Left cardiac atrium (tissue), 4 donors: ENCODE measurements at regions of chr10 and their contacts with region 1.

Region 1: GRCh38 chr10:13382703-13383398 is 34.8 kb upstream of the SEPHS1 start:
- DNase-seq: no peak
- ATAC-seq: peak in 1 of 2 donors; percentile 33

Region 2: GRCh38 chr10:12875100-12875499 is 507.8 kb before region 1 on chr10:
- intact Hi-C with region 1: no loop called
- DNase-seq: no peak
- ATAC-seq: peak; percentile 42 to 91

Region 3: GRCh38 chr10:13425397-13425796 is 42.5 kb after region 1 on chr10:
- intact Hi-C with region 1: loop called in 1 of 2 experiments (anchors 5 kb)
- DNase-seq: no peak
- ATAC-seq: no peak

Region 4: DNA sequence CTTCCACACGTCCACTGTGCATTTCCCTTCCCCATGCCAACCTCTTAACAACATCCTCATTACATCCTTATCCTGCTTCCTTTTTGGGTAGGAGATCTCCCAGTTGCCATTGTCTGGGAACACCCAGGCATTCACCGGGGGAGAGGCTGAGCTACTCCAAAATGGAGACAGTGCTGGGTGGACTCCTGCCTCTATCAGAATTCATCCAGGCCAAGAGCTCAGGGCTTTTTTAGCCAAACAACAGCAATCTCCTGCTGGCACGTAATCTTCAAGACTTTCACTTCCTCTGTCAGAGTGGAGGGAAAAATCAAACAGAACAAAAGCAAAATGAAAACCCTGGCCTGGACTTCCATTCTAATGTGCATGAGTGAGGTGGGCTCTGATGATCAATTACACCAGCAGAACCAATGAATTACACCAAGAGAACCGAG is 448.9 kb after region 1 on chr10:
- intact Hi-C with region 1: no loop called
- DNase-seq: no peak
- ATAC-seq: peak; percentile 31 to 50